ENCODE measurements at regions of chr6 and their contacts with region 1.

Region 1: DNA sequence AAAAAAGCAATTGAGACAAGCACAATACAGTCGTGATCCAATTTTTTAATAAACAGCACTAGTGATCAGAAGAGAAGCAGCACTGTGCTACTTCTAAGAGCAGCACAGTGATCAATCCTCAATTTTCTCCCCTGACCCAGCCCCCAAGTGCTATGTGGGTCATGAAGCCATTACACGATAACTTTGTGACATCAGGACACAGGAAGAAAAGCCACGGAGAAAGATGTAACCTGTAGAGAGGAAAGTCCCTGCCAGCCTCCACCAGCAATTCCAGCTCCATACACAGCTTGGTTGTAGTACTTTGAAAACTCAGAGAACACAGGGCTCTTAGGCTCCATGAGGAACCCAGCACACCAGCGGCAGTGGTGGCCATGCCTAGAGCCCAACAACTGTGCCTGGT is 45.3 kb upstream of the MYB start:
- DNase-seq: no peak
- ATAC-seq: no peak
- H3K4me3 ChIP-seq: no peak overlapping the region
- H3K27ac ChIP-seq: no peak overlapping the region
- H3K4me1 ChIP-seq: no peaks in the 10 kb centered on the region
- H3K27me3 ChIP-seq: no peaks in the 10 kb centered on the region
- CTCF ChIP-seq: no peak
- POLR2A ChIP-seq: no peak

Region 2: DNA sequence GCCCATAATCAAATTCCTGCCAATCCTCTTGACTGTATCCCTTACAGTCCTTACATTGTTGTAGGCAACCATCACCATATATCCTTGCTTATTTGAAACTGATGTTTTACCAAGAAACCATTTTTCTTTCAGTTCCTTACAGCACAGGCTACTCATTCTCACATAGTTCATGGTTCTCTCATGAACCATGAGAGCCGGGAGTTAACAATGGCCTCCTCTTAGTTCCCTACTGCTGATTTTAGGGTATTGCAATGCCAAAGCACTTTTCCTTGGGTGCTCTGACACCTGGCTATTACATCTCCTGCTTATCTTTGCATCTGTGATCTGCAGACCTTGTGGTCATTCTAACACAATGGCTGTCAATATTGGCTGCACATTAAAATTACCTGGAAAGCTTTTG is 178.7 kb after region 1 on chr6:
- intact Hi-C with region 1: no loop called
- DNase-seq: no peak
- ATAC-seq: no peak
- H3K4me3 ChIP-seq: no peak overlapping the region
- H3K27ac ChIP-seq: no peak overlapping the region
- H3K4me1 ChIP-seq: no peaks in the 10 kb centered on the region
- H3K27me3 ChIP-seq: no peaks in the 10 kb centered on the region
- CTCF ChIP-seq: no peak
- POLR2A ChIP-seq: no peak

Region 3: GRCh38 chr6:135423649-135424128 is 287.9 kb after region 1 on chr6:
- intact Hi-C with region 1: loop called (anchors 10 kb)
- DNase-seq: peak in 1 of 4 donors; percentile 37
- ATAC-seq: peak; percentile 71
- H3K4me3 ChIP-seq: no peak overlapping the region
- H3K27ac ChIP-seq: no peak overlapping the region
- H3K4me1 ChIP-seq: no peaks in the 10 kb centered on the region
- H3K27me3 ChIP-seq: no peaks in the 10 kb centered on the region
- CTCF ChIP-seq: peak; percentile 30 to 72 (median 62)
- POLR2A ChIP-seq: no peak